ENCODE measurements at regions of chr4 and their contacts with region 1.

Region 1: GRCh38 chr4:142126890-142127497 is 490.6 kb downstream of the IL15 start:
- DNase-seq: no peak
- ATAC-seq: peak; percentile 65

Region 2: DNA sequence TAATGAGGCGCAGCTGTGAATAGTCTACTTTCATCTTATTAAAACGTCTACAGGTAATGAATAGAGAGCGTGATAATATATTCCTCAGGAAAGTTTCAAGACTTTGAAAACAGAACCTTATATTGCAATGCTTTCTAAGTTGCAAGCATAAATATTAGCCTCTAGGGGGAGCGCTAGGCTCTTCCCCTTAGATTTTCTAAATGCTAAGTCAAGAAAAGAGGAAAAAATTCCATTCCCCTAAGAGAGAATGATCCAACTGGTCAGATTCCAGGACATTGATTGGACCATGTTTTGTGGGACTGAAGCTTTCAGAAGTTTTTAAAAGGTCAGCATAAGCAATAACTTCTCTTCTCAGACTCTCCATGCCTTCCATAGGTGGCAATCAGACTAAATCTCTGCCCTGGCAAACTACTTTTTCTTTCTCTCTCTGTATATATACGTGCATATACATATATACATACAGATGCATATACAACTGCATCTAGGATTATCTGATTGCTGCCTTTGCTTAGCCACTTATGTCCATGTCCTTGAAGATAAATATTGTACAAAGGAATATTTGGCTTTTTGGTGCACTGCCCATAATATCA is 226.2 kb after region 1 on chr4:
- intact Hi-C with region 1: loop called (anchors 10 kb)
- DNase-seq: no peak
- ATAC-seq: peak; percentile 48

Region 3: GRCh38 chr4:142615318-142615654 is 488.3 kb after region 1 on chr4:
- intact Hi-C with region 1: no loop called
- DNase-seq: no peak
- ATAC-seq: no peak

Region 4: GRCh38 chr4:142719854-142720541 is 593.0 kb after region 1 on chr4:
- intact Hi-C with region 1: loop called (anchors 10 kb)
- DNase-seq: no peak
- ATAC-seq: peak; percentile 29

Region 5: DNA sequence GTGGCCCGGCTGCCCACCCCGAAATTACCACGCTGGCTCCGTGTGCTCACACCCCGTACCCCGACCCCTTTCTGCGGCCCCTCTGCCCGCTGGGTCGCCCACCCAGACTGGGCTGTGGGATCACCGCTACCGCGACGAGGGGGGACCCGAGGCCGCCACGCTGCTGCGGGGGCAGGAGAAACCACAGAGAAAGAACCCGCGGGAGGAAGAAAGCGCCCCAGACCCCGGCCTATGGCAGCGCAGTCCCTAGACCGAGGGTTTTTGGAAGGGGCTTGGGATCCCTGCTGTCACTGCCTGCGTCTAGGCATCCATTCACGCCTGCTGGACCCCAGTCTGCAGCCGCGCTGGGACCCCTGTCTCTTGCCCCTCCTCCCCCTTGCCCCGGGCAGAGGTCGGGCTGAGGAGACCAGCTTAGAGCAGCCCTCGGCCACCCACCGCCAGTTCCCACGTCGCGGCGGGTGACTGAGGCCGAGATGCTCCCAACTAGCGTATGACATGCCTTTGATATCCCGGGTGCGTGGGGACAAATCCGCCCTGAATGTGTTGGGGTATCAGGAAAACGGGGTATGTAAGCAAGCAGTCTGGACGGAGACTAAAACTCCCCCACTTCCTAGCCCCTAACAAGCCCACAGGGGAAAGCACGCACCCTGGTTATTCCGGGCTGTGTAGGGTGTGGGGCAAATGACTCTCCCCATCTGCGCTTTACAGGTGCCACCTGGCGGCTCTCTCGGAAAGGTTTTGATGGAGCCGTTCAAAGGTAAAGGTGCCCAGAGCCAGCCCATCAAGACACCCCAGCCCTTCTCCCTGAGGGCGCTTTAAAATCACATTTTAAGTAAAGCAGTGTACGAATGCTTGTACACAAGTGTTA is 720.0 kb after region 1 on chr4:
- intact Hi-C with region 1: loop called (anchors 5 kb)
- DNase-seq: peak; percentile 58
- ATAC-seq: peak; percentile 80

Measured in left ventricle myocardium superior (tissue), 1 donor.